Activated CD4-positive, alpha-beta T cell treated with anti-CD3 and anti-CD28 coated beads, Interleukin-2, amount 10 ng/mL, durations not matched to agents 7 days and 5 days (primary cell): ENCODE measurements at regions of chr2 and their contacts with region 1.

Region 1: DNA sequence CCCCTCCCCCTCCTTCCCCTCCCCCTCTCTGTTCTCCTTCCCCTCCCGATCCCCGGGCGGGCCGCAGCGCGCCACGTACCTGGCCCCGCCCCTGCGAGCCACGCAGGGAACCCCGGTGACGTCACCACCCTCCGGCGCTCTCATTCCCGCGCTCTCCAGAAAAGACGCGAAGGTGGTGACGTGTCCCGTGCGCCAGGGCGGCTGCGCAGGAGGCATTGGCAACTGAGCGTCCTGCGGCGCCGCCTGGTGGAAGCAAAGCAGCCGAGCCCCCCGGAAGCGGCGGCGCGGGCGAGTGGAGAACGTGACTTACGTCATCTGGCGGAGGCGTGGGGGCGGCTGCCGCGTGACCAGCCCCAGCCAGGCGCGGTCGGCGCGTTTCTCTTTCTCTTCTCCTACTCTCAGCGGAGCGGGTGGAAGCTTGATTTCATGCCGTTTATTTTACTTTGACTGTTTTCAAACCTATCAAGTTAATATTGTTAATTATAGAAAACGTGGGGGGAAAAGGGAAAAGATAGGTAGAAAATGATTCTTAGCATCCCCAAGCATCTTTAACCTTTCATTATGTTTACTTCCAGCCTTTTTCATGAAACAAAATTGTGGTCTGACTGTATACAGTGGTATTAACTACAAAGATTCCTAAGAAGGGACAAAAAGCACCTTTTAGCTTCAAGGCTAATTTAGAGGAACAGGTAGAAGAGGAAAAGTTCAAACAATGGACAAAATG is 48.1 kb downstream of the C2orf42 start:
- DNase-seq: peak; percentile 100
- H3K4me3 Mint-ChIP-seq: peak overlapping the region; percentile 79
- H3K27ac Mint-ChIP-seq: peak overlapping the region; percentile 97
- H3K4me1 Mint-ChIP-seq: peaks cover 71% of the 10 kb centered on the region
- H3K27me3 Mint-ChIP-seq: no peaks in the 10 kb centered on the region

Region 2: GRCh38 chr2:69715964-69716363 is 426.8 kb before region 1 on chr2:
- CTCF ChIA-PET with region 1: no interaction called
- POLR2A ChIA-PET with region 1: no interaction called
- DNase-seq: no peak
- H3K4me3 Mint-ChIP-seq: no peak overlapping the region
- H3K27ac Mint-ChIP-seq: peak overlapping the region; percentile 31
- H3K4me1 Mint-ChIP-seq: peaks cover 23% of the 10 kb centered on the region
- H3K27me3 Mint-ChIP-seq: no peaks in the 10 kb centered on the region

Region 3: DNA sequence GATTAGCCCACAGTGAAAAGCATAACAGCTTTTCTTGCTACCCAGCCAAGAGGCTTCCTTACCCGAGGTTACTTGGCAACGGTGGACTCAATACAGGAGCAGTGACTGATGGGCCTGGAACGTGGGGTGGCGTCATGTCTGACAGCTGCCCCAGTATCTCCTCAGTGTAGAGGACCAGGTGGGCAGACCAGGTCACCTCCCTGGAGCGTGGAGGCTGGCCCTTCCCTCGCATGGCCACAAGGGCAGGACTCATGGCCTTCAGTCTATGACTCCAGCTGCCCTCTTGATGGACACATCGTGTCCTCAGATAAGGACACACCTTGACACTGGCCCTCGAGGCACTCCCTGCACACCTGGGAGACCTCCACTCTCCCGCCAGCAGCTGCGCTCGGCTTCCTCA is 187.7 kb before region 1 on chr2:
- CTCF ChIA-PET with region 1: no interaction called
- POLR2A ChIA-PET with region 1: no interaction called
- DNase-seq: no peak
- H3K4me3 Mint-ChIP-seq: no peak overlapping the region
- H3K27ac Mint-ChIP-seq: no peak overlapping the region
- H3K4me1 Mint-ChIP-seq: peaks cover 7% of the 10 kb centered on the region
- H3K27me3 Mint-ChIP-seq: peaks cover 27% of the 10 kb centered on the region

Region 4: DNA sequence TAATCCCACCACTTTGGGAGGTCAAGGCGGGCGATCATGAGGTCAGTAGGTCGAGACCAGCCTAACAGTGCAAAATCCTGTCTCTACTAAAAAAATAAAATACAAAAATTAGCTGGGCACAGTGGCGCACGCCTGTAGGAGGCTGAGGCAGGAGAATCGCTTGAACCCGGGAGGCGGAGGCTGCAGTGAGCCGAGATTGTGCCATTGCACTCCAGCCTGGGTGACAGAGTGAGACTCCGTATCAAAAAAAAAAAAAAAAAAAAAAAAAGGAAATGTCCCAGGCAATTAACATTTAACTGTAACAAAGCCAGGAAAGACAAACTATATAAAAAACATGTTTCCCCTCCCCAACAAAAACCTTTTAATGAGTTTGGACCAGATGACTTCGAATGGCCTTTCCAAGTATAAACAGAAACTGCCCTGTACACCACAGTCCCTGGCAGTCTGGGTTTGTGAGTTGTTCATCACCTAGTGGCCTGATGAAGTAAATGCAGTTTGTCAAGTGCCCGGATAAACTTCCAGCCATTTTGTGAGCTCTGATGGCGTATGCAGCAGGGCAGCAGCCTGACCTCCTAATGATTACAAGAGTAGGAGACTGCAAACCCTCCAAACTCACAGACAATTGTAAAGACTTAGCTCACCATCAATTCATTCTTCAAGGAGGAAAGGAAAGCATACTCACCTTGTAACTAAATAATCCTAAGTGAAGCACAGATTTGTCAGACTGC is 72.0 kb before region 1 on chr2:
- CTCF ChIA-PET with region 1: interaction called, 12 read pairs
- POLR2A ChIA-PET with region 1: no interaction called
- DNase-seq: peak; percentile 75
- H3K4me3 Mint-ChIP-seq: peak overlapping the region; percentile 47
- H3K27ac Mint-ChIP-seq: peak overlapping the region; percentile 93
- H3K4me1 Mint-ChIP-seq: peaks cover 49% of the 10 kb centered on the region
- H3K27me3 Mint-ChIP-seq: no peaks in the 10 kb centered on the region

Region 5: GRCh38 chr2:70086278-70086837 is 56.4 kb before region 1 on chr2:
- CTCF ChIA-PET with region 1: interaction called, 11 read pairs
- POLR2A ChIA-PET with region 1: interaction called, 6 read pairs
- DNase-seq: peak; percentile 84
- H3K4me3 Mint-ChIP-seq: peak overlapping the region; percentile 98
- H3K27ac Mint-ChIP-seq: peak overlapping the region; percentile 100
- H3K4me1 Mint-ChIP-seq: peaks cover 51% of the 10 kb centered on the region
- H3K27me3 Mint-ChIP-seq: no peaks in the 10 kb centered on the region

Region 6: GRCh38 chr2:70124983-70125480 is 17.7 kb before region 1 on chr2:
- CTCF ChIA-PET with region 1: interaction called, 13 read pairs
- POLR2A ChIA-PET with region 1: interaction called, 4 read pairs
- DNase-seq: peak; percentile 58
- H3K4me3 Mint-ChIP-seq: peak overlapping the region; percentile 93
- H3K27ac Mint-ChIP-seq: peak overlapping the region; percentile 100
- H3K4me1 Mint-ChIP-seq: peaks cover 78% of the 10 kb centered on the region
- H3K27me3 Mint-ChIP-seq: no peaks in the 10 kb centered on the region